ENCODE measurements at regions of chr12 and their contacts with region 1.

Region 1: DNA sequence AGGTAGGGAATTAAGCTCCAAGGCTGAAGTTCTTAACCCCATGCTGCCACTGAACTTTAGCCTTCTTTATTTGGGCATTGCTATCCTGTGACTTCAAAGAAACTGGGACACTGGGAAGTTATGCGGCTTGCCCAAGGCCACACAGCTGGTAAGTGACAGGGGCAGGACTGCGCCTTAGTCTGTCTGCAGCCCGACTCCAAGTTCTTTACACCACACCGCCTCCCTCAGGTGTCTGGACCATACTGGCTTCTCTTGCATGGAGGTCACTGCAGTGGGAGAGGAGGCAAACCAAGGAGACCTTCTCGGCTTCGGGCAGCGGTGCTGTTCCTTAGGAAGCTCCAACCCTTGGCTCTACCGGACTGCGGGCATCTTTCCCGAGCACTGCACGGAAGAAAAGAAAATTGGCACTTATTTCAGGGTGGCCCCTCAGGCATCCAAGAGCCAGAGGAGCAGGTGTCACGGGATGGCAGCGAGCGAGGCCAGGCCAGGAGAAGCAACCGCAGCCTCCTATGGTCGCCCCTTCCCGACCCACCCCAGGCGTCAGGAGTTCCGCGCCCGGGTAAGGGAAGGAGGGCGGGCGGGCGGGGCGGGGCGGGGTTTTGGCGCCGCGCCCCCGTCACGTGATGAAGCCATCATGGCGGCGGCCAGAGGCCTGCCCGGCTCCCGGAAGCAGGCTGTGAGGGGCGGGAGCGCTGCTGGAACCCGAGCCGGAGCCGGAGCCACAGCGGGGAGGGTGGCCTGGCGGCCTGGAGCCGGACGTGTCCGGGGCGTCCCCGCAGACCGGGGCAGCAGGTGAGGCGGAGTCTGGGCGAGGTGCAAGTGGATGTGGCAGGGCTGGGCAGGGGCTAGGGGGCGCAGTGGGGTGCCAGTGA is 16.4 kb upstream of the ESPL1 start:
- DNase-seq: peak; percentile 83 to 87
- ATAC-seq: peak; percentile 90 to 92
- H3K4me3 ChIP-seq: peak overlapping the region; percentile 90
- H3K27ac ChIP-seq: peak overlapping the region; percentile 91 to 94
- H3K4me1 ChIP-seq: peaks cover 16% of the 10 kb centered on the region
- CTCF ChIP-seq: peak; percentile 47
- EP300 ChIP-seq: no peak
- POLR2A ChIP-seq: peak; percentile 92
- RAD21 ChIP-seq: peak; percentile 64 to 69

Region 2: GRCh38 chr12:53274445-53274844 is 22.7 kb after region 1 on chr12:
- CTCF ChIA-PET with region 1: interaction called, 35 read pairs
- POLR2A ChIA-PET with region 1: no interaction called
- DNase-seq: no peak
- ATAC-seq: no peak
- H3K4me3 ChIP-seq: no peak overlapping the region
- H3K27ac ChIP-seq: no peak overlapping the region
- H3K4me1 ChIP-seq: peaks cover 5% of the 10 kb centered on the region
- CTCF ChIP-seq: no peak
- EP300 ChIP-seq: no peak
- POLR2A ChIP-seq: no peak
- RAD21 ChIP-seq: no peak

Region 3: GRCh38 chr12:53336181-53336681 is 84.5 kb after region 1 on chr12 and contains the start of gene SP7:
- CTCF ChIA-PET with region 1: no interaction called
- POLR2A ChIA-PET with region 1: no interaction called
- DNase-seq: no peak
- ATAC-seq: peak; percentile 25 to 49; a peak in 5 of 6 replicates
- H3K4me3 ChIP-seq: no peak within 1 kb of the TSS
- H3K27ac ChIP-seq: peak within 1 kb of the TSS in 1 of 2 experiments; percentile 34; a peak in 1 of 6 replicates
- H3K4me1 ChIP-seq: no peaks in the 10 kb centered on the region
- CTCF ChIP-seq: no peak
- EP300 ChIP-seq: no peak
- POLR2A ChIP-seq: no peak
- RAD21 ChIP-seq: no peak
- polyA plus RNA-seq, gene SP7: 0.05 TPM in 1 of 2 replicates, not detected in the other

Measured in A549 (cell line).